ENCODE measurements at regions of chr1 and their contacts with region 1.

Region 1: DNA sequence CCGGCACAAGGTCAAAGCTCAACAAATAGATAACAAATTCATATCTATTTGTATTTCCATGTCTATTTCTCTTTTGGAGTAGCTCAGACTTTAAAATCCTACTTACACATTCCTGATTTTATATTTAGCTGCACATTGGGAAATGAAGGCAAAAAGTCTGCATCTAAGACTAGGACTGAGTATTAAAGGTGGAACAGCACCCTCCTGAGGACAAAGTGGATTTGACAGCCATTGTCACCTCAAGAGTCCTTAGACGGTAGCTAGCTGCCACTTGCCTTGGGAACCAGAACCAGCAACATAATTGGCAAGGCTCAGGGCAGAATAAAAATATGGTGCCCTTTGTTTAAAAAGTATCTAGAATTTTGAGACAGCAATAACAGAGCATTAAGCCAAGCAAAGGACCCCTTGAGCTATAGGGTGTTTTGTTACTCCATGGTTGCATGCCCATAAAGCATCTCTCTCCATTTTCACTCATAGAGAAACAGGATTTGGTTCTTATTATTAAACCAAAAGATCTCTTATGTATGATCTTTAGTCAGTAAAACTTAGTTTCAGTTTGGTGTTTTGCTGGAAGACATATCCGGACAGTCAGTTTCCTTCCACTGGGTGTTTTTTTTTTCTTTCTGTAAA is 30.0 kb upstream of the SGIP1 start:
- DNase-seq: peak; percentile 69
- H3K4me3 Mint-ChIP-seq: no peak overlapping the region
- H3K27ac Mint-ChIP-seq: no peak overlapping the region
- H3K4me1 Mint-ChIP-seq: no peaks in the 10 kb centered on the region
- H3K27me3 Mint-ChIP-seq: no peaks in the 10 kb centered on the region
- CTCF ChIP-seq: peak; percentile 44

Region 2: DNA sequence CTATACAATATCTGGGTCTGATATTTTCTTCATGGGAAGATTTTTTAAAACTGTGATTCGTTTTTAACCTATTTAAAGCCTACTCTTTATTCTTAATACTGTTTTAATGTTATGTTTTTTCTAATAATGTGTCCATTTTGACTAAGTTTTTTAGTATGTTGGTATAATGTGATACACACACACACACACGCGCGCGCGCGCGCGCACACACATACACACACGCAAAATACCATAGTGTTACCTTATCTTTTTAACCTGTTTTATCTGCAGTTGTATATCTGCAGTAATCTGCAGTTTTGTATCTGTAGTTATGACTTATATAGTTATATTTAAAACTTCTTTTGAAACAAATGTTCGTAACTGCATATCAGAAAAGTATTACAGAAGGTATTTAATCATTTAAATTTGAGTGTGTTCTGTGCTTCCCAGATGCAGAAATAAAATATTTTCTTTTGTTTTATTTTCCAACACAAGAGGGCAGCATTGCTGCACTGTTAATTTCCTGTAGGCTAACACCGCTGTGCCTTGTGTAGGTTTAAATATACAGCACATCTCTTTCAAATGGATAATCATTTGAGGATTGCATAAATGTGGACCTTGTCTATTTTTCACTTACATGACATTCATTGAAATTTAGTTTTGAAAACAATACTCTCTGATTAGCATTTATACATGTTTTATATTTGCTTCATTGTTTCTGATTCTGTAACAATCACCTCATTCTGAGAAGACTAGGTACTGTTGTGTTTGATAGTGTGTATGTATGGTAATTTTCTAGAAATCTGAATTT is 545.2 kb before region 1 on chr1:
- CTCF ChIA-PET with region 1: interaction called, 5 read pairs
- POLR2A ChIA-PET with region 1: no interaction called
- intact Hi-C with region 1: loop called (anchors 10 kb)
- DNase-seq: peak; percentile 62
- H3K4me3 Mint-ChIP-seq: no peak overlapping the region
- H3K27ac Mint-ChIP-seq: no peak overlapping the region
- H3K4me1 Mint-ChIP-seq: no peaks in the 10 kb centered on the region
- H3K27me3 Mint-ChIP-seq: no peaks in the 10 kb centered on the region
- CTCF ChIP-seq: peak; percentile 60

Region 3: GRCh38 chr1:66253330-66253921 is 250.5 kb before region 1 on chr1:
- CTCF ChIA-PET with region 1: interaction called, 12 read pairs
- POLR2A ChIA-PET with region 1: no interaction called
- intact Hi-C with region 1: loop called (anchors 1 kb)
- DNase-seq: peak; percentile 77
- H3K4me3 Mint-ChIP-seq: no peak overlapping the region
- H3K27ac Mint-ChIP-seq: no peak overlapping the region
- H3K4me1 Mint-ChIP-seq: peaks cover 32% of the 10 kb centered on the region
- H3K27me3 Mint-ChIP-seq: no peaks in the 10 kb centered on the region
- CTCF ChIP-seq: peak; percentile 77

Region 4: DNA sequence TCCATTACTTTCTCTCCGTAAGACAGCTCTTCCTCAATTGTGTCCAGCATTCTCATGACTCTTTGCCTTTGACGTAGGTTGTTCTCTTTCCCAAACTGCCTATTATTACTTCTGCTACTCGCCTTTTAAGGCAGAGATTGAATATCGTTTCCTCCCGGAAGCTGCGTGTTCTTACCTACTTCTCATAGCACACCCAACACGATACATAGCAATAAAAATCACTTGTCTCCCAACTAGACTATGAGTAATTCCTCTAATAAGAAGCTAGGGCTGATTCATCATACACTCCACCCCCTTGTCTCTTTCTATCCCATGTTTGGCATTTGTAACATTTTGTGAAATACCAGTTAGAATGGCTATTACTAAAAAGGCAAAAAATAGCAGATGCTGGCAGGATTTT is 25.8 kb before region 1 on chr1:
- CTCF ChIA-PET with region 1: interaction called, 17 read pairs
- POLR2A ChIA-PET with region 1: no interaction called
- intact Hi-C with region 1: no loop called
- DNase-seq: peak; percentile 74
- H3K4me3 Mint-ChIP-seq: peak overlapping the region; percentile 4
- H3K27ac Mint-ChIP-seq: peak overlapping the region; percentile 62
- H3K4me1 Mint-ChIP-seq: peaks cover 6% of the 10 kb centered on the region
- H3K27me3 Mint-ChIP-seq: no peaks in the 10 kb centered on the region
- CTCF ChIP-seq: no peak

Region 5: DNA sequence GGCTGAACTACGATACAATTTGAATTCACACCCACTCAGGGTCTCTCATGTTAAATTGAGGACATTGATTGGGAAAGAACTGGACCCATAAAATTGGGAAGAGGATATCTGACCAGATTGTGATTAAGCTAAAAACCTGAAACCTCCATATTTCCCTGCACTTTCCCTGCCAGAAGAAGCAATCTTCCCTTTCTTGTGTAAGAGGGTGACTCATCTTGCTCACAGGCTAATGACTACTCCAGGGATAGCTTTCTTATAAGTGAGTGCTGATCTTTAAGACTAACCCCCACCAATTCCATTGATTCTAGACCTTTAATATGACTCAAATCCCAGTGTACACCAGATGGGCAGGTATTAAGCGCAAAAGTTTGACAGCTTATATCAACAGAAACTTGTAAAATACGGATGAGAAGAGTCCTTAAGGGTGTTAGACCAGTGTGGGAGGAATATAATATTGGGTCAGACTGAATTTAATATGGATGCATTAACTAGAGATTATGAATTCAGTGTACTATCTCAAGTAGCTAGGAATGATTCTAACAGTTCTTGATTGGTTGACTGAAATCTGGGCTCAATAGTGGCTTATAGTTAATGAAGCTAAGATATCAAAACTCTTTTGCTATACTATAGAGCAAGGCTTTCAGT is 17.9 kb after region 1 on chr1:
- CTCF ChIA-PET with region 1: interaction called, 15 read pairs
- POLR2A ChIA-PET with region 1: no interaction called
- intact Hi-C with region 1: no loop called
- DNase-seq: peak; percentile 88
- H3K4me3 Mint-ChIP-seq: no peak overlapping the region
- H3K27ac Mint-ChIP-seq: no peak overlapping the region
- H3K4me1 Mint-ChIP-seq: peaks cover 13% of the 10 kb centered on the region
- H3K27me3 Mint-ChIP-seq: no peaks in the 10 kb centered on the region
- CTCF ChIP-seq: no peak

Region 6: DNA sequence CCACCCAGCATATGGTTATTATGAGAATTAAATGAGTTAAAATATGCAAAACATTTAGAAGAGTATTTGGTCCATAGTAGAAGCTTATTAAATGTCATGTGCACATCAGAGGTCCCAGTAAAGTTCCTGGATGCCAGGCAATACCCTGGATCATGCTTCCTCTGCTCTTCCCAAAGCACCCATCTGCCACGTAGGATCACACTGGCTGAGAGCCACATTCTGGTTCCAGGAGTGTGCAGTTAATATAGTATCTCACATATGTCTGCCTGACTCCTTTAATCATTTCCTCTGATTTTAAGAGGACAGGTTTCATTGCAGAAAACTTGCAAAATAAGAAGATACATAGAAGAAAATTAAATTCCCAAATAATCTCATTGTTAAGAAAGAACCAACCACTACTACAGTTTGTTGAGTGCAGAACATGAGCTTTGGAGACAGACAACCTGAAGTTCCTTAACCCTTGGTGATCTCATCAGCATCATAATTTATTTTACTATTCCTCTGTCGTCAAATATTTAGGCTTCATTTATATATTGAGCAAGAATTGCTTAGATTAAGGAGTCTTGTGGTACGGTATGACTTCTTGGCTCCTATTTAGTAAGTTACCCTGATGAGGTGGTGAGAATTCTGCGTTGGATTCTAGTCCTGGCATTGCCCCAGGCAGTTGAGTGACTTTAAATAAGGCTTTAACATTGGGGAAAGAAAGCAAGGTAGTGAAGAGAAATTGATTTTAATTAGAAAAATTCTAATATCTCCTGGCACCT is 42.3 kb after region 1 on chr1:
- CTCF ChIA-PET with region 1: no interaction called
- POLR2A ChIA-PET with region 1: no interaction called
- intact Hi-C with region 1: no loop called
- DNase-seq: no peak
- H3K4me3 Mint-ChIP-seq: no peak overlapping the region
- H3K27ac Mint-ChIP-seq: no peak overlapping the region
- H3K4me1 Mint-ChIP-seq: peaks cover 6% of the 10 kb centered on the region
- H3K27me3 Mint-ChIP-seq: no peaks in the 10 kb centered on the region
- CTCF ChIP-seq: no peak

Region 7: GRCh38 chr1:66633159-66633558 is 129.2 kb after region 1 on chr1:
- CTCF ChIA-PET with region 1: no interaction called
- POLR2A ChIA-PET with region 1: no interaction called
- intact Hi-C with region 1: no loop called
- DNase-seq: no peak
- H3K4me3 Mint-ChIP-seq: no peak overlapping the region
- H3K27ac Mint-ChIP-seq: no peak overlapping the region
- H3K4me1 Mint-ChIP-seq: no peaks in the 10 kb centered on the region
- H3K27me3 Mint-ChIP-seq: no peaks in the 10 kb centered on the region
- CTCF ChIP-seq: no peak

Measured in MCF 10A (cell line).